Activated CD8-positive, alpha-beta T cell treated with anti-CD3 and anti-CD28 coated beads for 36 hours (primary cell): ENCODE measurements at regions of chr2 and their contacts with region 1.

Region 1: GRCh38 chr2:3594493-3595281 is at the start of gene COLEC11:
- DNase-seq: no peak
- ATAC-seq: no peak
- H3K4me3 Mint-ChIP-seq: no peak within 1 kb of the TSS
- H3K27ac Mint-ChIP-seq: no peak within 1 kb of the TSS
- H3K4me1 Mint-ChIP-seq: peaks cover 13% of the 10 kb centered on the region
- H3K27me3 Mint-ChIP-seq: no peaks in the 10 kb centered on the region
- CTCF ChIP-seq: no peak
- total RNA-seq, gene COLEC11: 0.49 TPM in 1 of 2 experiments, not detected in the other

Region 2: DNA sequence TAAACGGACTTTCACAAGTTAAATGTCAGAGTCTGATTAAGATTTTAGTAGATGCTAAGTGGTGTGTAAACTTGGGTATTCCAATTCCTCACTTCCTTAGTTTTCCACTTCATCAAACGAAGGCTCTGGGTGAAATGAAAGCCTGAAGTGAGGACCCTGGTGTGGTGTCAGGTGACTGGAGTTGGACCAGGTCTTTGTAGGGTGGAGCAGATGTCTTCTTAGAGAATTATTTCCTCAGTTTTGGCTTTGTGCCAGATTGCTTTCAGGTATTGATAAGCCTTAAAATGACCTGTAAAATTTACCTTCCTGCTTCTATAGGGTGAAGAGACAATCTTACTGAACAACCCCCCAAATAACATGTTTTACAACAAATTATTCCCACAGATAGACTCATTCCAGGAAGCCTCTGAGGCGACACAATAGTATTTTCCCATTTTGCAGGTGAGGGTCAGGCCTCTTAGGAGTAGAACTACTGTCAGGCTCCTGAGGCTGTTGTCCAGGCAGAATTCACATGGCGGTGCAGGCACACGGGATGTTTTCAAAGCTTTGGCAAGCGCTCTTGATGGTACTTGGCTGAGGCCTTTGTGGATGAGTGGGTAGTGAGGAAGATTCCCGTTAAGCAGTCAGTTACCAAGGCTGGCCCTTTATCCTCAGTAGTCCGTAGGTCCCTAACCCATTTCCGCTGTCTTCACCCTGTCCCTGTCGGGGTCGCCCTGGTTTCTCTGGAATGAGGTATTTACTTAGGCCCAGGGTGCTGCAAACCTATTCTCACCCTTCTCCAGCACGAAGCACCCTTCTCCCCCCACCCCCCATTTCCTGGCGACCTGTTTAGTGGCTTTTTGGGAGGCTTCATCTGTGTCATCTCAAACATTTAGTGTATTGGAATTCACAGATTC is 13.1 kb before region 1 on chr2:
- CTCF ChIA-PET with region 1: no interaction called
- POLR2A ChIA-PET with region 1: interaction called, 13 read pairs
- intact Hi-C with region 1: no loop called
- DNase-seq: no peak
- ATAC-seq: no peak
- H3K4me3 Mint-ChIP-seq: no peak overlapping the region
- H3K27ac Mint-ChIP-seq: no peak overlapping the region
- H3K4me1 Mint-ChIP-seq: peaks cover 35% of the 10 kb centered on the region
- H3K27me3 Mint-ChIP-seq: no peaks in the 10 kb centered on the region
- CTCF ChIP-seq: no peak